ENCODE measurements at regions of chr9 and their contacts with region 1.

Region 1: GRCh38 chr9:135410831-135411473 is 68.6 kb upstream of the PPP1R26 start:
- DNase-seq: no peak

Region 2: GRCh38 chr9:135098400-135099105 is 312.4 kb before region 1 on chr9:
- in situ Hi-C with region 1: loop called (anchors 10 kb)
- DNase-seq: no peak

Measured in SK-MEL-5 (cell line).